Dorsolateral prefrontal cortex (tissue), 120 donors: ENCODE measurements at regions of chr9 and their contacts with region 1.

Region 1: DNA sequence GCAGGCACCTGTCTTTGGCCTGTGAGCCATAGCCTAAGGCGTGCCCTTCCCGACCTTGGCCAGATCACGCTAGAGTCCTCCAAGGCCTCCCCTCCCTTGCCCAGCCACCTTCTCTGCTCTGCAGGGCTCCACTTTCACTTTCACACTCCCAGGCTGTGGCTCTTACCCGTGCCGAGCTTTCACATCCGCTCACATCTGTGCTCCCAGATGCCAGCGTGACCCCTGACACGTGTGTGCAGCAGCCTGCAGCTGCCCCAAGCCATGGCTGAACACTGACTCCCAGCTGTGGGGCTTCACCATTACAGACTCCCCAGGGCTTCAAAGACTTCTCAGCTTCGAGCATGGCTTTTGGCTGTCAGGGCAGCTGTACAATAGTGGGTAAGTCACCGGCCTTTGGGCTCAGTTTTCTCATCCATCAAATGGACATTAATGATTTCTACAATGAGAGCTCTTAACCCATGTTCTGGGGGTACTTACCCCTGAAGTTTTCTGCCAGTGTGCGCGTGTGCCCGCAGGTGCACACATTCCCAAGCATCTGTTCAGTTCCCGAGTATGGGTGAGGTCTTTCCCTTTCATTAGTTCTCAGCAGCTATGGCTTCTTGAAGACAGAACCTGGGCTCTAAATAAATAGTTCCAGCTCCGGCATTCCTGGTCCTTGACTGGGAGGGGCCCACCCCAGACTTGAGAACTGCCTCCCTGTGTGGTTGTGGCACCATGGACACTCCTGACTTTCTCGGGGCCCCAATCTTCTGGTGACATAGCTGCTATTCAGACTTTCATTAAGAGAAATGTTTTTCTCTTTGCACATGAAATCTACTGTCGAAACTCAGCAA is 118.6 kb downstream of the RGS3 start:
- DNase-seq: peak in 9 of 10 donors; percentile 71 to 89 (median 86)
- H3K4me3 ChIP-seq: peak overlapping the region in 24 of 59 donors; percentile 2 to 31 (median 16)
- H3K27ac ChIP-seq: peak overlapping the region in 58 of 59 donors; percentile 48 to 95 (median 89)
- H3K27me3 ChIP-seq: no peaks in the 10 kb centered on the region
- CTCF ChIP-seq: peak in 55 of 56 donors; percentile 37 to 85 (median 59)

Region 2: DNA sequence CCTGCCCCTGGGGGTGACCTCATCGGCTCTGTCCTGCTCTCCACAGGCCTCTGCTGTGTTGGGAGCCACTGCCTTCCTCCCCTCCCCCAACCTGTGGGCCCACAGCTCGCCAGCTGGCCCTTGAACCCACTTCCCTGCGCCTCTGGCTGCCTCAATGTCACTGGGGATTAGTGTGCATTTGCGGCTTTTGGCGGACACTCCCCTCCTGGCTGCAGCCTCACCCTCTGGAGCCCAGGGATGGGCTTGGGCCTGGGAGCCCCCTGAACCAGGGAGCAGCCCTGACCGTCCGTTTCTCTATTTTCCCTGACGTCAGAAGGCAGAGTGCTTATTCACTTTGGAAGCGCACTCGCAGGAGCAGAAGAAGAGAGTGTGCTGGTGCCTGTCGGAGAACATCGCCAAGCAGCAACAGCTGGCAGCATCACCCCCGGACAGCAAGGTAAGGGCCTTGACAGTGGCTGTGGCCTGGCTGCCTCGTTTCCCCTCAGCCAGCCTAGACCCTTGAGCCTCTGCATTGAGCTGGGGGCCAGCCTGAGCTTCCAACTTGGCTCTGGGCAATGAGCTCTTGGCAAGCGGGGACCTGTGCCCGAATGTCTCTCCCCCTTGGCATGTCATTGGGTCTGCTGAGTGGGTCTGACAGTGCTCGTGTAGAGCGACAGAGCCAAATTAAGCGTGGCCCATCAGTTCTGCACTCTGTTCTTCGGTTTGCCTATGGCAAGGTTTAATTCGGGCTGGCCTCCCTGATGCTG is 45.4 kb before region 1 on chr9:
- intact Hi-C with region 1: loop called (anchors 1 to 5 kb)
- DNase-seq: peak; percentile 37 to 98 (median 94)
- H3K4me3 ChIP-seq: peak overlapping the region; percentile 10 to 80 (median 54)
- H3K27ac ChIP-seq: peak overlapping the region; percentile 71 to 99 (median 95)
- H3K27me3 ChIP-seq: no peaks in the 10 kb centered on the region
- CTCF ChIP-seq: peak in 11 of 56 donors; percentile 4 to 47 (median 22)

Region 3: GRCh38 chr9:113622600-113623400 is 40.7 kb after region 1 on chr9:
- intact Hi-C with region 1: no loop called
- DNase-seq: peak in 5 of 10 donors; percentile 1 to 26 (median 14)
- H3K4me3 ChIP-seq: no peak overlapping the region
- H3K27ac ChIP-seq: no peak overlapping the region
- H3K27me3 ChIP-seq: peaks cover 0 to 13% (median 0%) of the 10 kb centered on the region in 45 donors
- CTCF ChIP-seq: no peak

Region 4: GRCh38 chr9:113844466-113844865 is 262.4 kb after region 1 on chr9:
- intact Hi-C with region 1: no loop called
- DNase-seq: no peak
- H3K4me3 ChIP-seq: no peak overlapping the region
- H3K27ac ChIP-seq: no peak overlapping the region
- H3K27me3 ChIP-seq: no peaks in the 10 kb centered on the region
- CTCF ChIP-seq: no peak